MCF 10A (cell line): ENCODE measurements at regions of chr6 and their contacts with region 1.

Region 1: GRCh38 chr6:43769526-43770416 is at the start of gene VEGFA:
- DNase-seq: peak; percentile 87
- H3K4me3 Mint-ChIP-seq: peak within 1 kb of the TSS; percentile 98
- H3K27ac Mint-ChIP-seq: peak within 1 kb of the TSS; percentile 81
- H3K4me1 Mint-ChIP-seq: peaks cover 18% of the 10 kb centered on the region
- H3K27me3 Mint-ChIP-seq: no peaks in the 10 kb centered on the region
- CTCF ChIP-seq: peak; percentile 97
- total RNA-seq, gene VEGFA: 265 and 366 TPM in 2 replicates

Region 2: GRCh38 chr6:43629505-43630300 is 140.1 kb before region 1 on chr6:
- CTCF ChIA-PET with region 1: interaction called, 3 read pairs
- POLR2A ChIA-PET with region 1: interaction called, 21 read pairs
- intact Hi-C with region 1: loop called (anchors 2 kb)
- DNase-seq: peak; percentile 99
- H3K4me3 Mint-ChIP-seq: peak overlapping the region; percentile 99
- H3K27ac Mint-ChIP-seq: peak overlapping the region; percentile 97
- H3K4me1 Mint-ChIP-seq: peaks cover 34% of the 10 kb centered on the region
- H3K27me3 Mint-ChIP-seq: no peaks in the 10 kb centered on the region
- CTCF ChIP-seq: no peak

Region 3: GRCh38 chr6:43687437-43688347 is 82.1 kb before region 1 on chr6 and contains the start of gene MRPS18A:
- CTCF ChIA-PET with region 1: interaction called, 5 read pairs
- POLR2A ChIA-PET with region 1: interaction called, 18 read pairs
- intact Hi-C with region 1: no loop called
- DNase-seq: peak; percentile 83
- H3K4me3 Mint-ChIP-seq: peak within 1 kb of the TSS; percentile 90
- H3K27ac Mint-ChIP-seq: peak within 1 kb of the TSS; percentile 92
- H3K4me1 Mint-ChIP-seq: peaks cover 33% of the 10 kb centered on the region
- H3K27me3 Mint-ChIP-seq: no peaks in the 10 kb centered on the region
- CTCF ChIP-seq: no peak
- total RNA-seq, gene MRPS18A: 69.1 and 79.5 TPM in 2 replicates

Region 4: GRCh38 chr6:43758617-43759050 is 11.1 kb before region 1 on chr6:
- CTCF ChIA-PET with region 1: interaction called, 16 read pairs
- POLR2A ChIA-PET with region 1: no interaction called
- intact Hi-C with region 1: no loop called
- DNase-seq: no peak
- H3K4me3 Mint-ChIP-seq: no peak overlapping the region
- H3K27ac Mint-ChIP-seq: peak overlapping the region; percentile 17
- H3K4me1 Mint-ChIP-seq: peaks cover 11% of the 10 kb centered on the region
- H3K27me3 Mint-ChIP-seq: peaks cover 14% of the 10 kb centered on the region
- CTCF ChIP-seq: peak; percentile 57

Region 5: GRCh38 chr6:44010411-44011349 is 240.9 kb after region 1 on chr6:
- CTCF ChIA-PET with region 1: interaction called, 3 read pairs
- POLR2A ChIA-PET with region 1: interaction called, 5 read pairs
- intact Hi-C with region 1: loop called (anchors 5 kb)
- DNase-seq: peak; percentile 91
- H3K4me3 Mint-ChIP-seq: peak overlapping the region; percentile 25
- H3K27ac Mint-ChIP-seq: peak overlapping the region; percentile 79
- H3K4me1 Mint-ChIP-seq: peaks cover 39% of the 10 kb centered on the region
- H3K27me3 Mint-ChIP-seq: no peaks in the 10 kb centered on the region
- CTCF ChIP-seq: no peak

Region 6: GRCh38 chr6:44064089-44064947 is 294.5 kb after region 1 on chr6:
- CTCF ChIA-PET with region 1: interaction called, 14 read pairs
- POLR2A ChIA-PET with region 1: interaction called, 20 read pairs
- intact Hi-C with region 1: no loop called
- DNase-seq: peak; percentile 91
- H3K4me3 Mint-ChIP-seq: no peak overlapping the region
- H3K27ac Mint-ChIP-seq: peak overlapping the region; percentile 57
- H3K4me1 Mint-ChIP-seq: peaks cover 42% of the 10 kb centered on the region
- H3K27me3 Mint-ChIP-seq: no peaks in the 10 kb centered on the region
- CTCF ChIP-seq: no peak

Region 7: DNA sequence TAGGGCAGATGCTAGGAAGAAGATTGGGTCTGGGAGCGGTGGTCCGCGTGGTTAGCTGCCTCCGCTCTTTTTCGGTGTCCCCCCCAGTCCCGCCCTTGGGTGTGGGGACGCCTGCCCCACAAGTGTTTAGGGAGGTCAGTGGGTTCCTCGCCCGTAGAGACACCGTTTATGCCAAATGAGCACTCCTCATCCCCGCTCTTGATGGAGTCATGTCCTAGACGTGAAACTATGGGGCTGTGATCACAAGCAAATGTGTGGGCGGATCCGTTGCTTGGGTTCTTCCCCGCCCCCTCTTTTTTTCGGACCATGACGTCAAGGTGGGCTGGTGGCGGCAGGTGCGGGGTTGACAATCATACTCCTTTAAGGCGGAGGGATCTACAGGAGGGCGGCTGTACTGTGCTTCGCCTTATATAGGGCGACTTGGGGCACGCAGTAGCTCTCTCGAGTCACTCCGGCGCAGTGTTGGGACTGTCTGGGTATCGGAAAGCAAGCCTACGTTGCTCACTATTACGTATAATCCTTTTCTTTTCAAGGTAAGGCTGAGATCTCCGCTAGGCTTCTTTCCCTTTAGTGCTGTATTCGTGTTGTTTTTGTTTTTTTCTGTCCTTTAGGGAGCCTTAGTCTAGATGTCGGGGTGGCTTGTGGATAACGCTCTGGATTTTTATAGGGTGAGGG is 477.0 kb after region 1 on chr6 and contains the start of gene HSP90AB1:
- CTCF ChIA-PET with region 1: interaction called, 4 read pairs
- POLR2A ChIA-PET with region 1: interaction called, 3 read pairs
- intact Hi-C with region 1: loop called (anchors 10 kb)
- DNase-seq: peak; percentile 98
- H3K4me3 Mint-ChIP-seq: peak within 1 kb of the TSS; percentile 95
- H3K27ac Mint-ChIP-seq: peak within 1 kb of the TSS; percentile 99
- H3K4me1 Mint-ChIP-seq: peaks cover 35% of the 10 kb centered on the region
- H3K27me3 Mint-ChIP-seq: no peaks in the 10 kb centered on the region
- CTCF ChIP-seq: no peak
- total RNA-seq, gene HSP90AB1: 546 and 577 TPM in 2 replicates

Region 8: DNA sequence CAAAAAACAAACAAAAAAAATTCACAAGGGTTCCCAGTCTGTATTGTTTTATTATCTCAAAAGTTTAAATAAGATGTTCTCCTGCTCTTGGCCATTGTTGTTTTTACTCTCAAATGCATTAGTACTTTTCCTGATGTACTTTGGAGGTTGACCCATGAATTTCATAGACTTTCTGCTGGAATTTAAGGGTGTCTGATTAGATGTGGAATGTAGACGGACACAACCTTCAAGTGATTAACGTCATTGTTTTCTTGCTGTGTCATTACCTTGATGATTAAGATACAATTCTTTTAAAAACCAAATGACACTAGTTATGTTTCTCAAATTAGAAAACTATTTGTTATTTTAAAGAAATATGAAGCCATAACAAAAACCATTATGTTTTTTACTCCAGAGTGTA is 1137.0 kb after region 1 on chr6:
- CTCF ChIA-PET with region 1: no interaction called
- POLR2A ChIA-PET with region 1: no interaction called
- intact Hi-C with region 1: no loop called
- DNase-seq: no peak
- H3K4me3 Mint-ChIP-seq: no peak overlapping the region
- H3K27ac Mint-ChIP-seq: no peak overlapping the region
- H3K4me1 Mint-ChIP-seq: no peaks in the 10 kb centered on the region
- H3K27me3 Mint-ChIP-seq: no peaks in the 10 kb centered on the region
- CTCF ChIP-seq: no peak